GM23248 (cell line): ENCODE measurements at regions of chr14 and their contacts with region 1.

Region 1: DNA sequence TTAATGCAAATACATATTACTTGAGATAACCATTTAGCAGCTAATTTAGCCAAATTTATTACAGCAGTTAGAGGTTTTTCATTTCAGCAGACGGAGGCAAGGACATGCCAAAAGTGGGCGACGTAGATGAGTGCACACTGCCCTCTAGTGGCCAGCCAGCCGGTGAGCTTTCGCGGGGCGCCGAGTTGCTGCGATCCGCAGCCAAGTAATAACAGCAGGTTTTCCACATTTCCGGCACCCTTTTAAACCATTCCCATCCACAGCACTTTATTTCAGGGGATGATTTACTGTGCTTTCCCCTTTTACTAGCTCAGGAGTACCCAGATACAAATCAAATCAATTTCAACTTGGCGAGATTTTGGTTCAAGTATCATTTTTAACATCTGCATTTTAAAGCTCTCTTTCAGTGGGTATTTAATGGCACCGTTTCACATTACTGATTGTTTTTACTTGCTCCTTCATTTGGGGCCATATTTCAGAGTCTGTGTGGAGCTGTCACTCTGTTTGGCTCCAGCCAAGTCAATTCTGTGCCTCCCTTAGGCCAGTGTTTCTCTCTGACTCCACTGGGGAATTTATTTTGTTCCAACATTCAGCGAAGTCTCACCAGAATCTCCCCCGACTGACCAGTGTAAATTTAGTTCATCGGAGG is 158.0 kb downstream of the EGLN3 start:
- DNase-seq: peak; percentile 88
- H3K4me3 ChIP-seq: peak overlapping the region; percentile 58
- H3K27ac ChIP-seq: no peak overlapping the region
- H3K4me1 ChIP-seq: peaks cover 31% of the 10 kb centered on the region
- H3K27me3 ChIP-seq: no peaks in the 10 kb centered on the region

Region 2: GRCh38 chr14:32710731-32711680 is 1081.8 kb before region 1 on chr14:
- in situ Hi-C with region 1: loop called (anchors 25 kb)
- DNase-seq: peak; percentile 68
- H3K4me3 ChIP-seq: peak overlapping the region; percentile 54
- H3K27ac ChIP-seq: peak overlapping the region; percentile 76
- H3K4me1 ChIP-seq: peaks cover 27% of the 10 kb centered on the region
- H3K27me3 ChIP-seq: no peaks in the 10 kb centered on the region

Region 3: DNA sequence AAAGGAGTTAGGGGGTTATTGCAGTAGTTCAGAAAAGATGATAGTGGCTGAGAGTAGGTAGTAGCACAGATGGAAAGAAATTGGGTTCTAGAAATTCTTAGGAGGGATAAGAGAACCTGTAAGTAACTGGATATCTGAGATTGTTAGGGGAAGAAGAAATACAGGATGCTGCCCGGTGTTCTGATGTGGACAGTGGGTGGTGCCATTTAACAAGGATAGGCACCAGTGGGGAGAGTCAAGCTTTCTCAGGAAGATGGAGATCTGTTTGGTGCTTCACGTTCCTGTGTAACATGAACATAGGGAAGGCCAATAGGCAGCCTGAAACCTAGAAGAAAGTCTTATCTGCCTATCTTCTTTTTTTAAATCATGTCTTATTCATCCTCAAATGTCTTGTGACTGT is 608.3 kb before region 1 on chr14:
- in situ Hi-C with region 1: loop called (anchors 25 kb)
- DNase-seq: peak; percentile 41
- H3K4me3 ChIP-seq: no peak overlapping the region
- H3K27ac ChIP-seq: no peak overlapping the region
- H3K4me1 ChIP-seq: no peaks in the 10 kb centered on the region
- H3K27me3 ChIP-seq: peaks cover 11% of the 10 kb centered on the region; the same call in 1 of the 2 replicates

Region 4: DNA sequence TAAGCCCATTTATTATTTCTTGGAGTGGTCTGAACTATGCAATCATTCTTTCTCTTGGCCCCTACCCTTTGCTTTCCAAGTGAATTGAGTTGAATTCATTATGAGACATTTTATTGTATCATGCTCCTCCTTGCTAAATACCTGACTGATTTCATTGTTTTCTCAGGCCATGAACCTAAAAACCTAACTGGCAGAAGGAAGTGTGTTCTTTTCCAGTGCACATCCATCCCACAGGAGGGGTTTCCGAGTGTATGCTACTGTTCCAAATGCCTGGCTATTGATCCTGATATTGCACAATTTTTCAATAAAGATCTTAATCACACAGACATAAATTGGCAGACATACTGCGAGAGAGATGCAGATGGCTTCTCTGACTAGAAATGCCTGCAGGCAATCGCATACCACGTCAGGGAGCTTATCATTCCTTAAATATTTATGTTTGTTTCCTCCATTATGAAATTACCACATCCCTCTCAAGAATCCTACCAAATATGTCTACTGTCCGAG is 320.2 kb after region 1 on chr14:
- in situ Hi-C with region 1: no loop called
- DNase-seq: peak; percentile 68
- H3K4me3 ChIP-seq: 0 out of 2 replicates have a peak overlapping the region, but pooled peaks have one; percentile 37
- H3K27ac ChIP-seq: no peak overlapping the region
- H3K4me1 ChIP-seq: peaks cover 13% of the 10 kb centered on the region; the same call in 1 of the 2 replicates
- H3K27me3 ChIP-seq: 0 out of 2 replicates have a peak, but pooled peaks cover 6% of the 10 kb centered on the region